SK-N-SH (cell line): ENCODE measurements at regions of chr11 and their contacts with region 1.

Region 1: DNA sequence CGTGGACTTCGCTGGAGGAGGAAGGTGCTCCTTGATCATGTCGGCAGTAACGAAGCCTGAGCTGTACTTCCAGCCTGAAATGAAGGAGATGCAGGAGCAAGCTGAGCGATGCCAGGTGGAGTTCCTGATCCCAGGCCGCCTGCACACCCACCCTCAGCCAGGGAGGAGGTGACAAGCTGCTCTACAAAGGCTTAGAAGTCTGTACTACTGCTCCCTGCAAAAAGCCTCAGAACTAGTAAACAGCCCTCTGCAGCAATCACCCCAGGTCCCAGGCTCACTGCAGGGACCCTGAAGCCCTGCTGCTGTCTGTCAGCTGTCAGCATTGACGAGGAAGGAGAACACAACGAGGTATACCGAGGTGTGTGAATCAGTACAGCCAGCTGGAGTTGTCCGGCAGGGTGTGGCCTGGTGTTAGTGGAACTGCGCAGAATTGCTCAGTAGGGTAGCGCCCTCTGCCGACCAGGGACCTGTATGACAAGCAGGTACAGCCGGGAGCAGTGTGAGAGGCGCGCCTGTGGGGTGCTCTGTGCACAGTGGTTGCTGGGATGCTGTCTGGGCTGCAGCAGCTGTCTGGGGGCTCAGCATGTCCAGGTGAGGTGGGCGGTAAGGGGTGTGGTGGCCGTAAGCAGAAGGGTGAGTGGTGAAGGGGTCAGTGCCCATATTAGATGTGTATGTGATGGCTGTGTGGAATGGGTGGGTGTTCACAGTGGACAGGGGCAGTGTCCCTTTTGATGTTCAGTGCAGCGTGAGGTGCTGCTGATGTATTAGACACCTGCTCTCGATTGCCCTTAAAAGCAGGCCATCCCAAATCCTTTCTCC is 7.6 kb downstream of the CYB5R2 start:
- DNase-seq: peak; percentile 90
- H3K4me3 ChIP-seq: no peak overlapping the region; a peak in 1 of 4 replicates
- H3K27ac ChIP-seq: no peak overlapping the region
- H3K4me1 ChIP-seq: peaks cover 0 to 2% of the 10 kb centered on the region in 2 experiments; a peak in 1 of 4 replicates
- H3K27me3 ChIP-seq: no peaks in the 10 kb centered on the region
- CTCF ChIP-seq: peak; percentile 79
- EP300 ChIP-seq: no peak
- RAD21 ChIP-seq: peak; percentile 93

Region 2: GRCh38 chr11:7098235-7098832 is 567.3 kb before region 1 on chr11:
- CTCF ChIA-PET with region 1: interaction called, 11 read pairs
- POLR2A ChIA-PET with region 1: no interaction called
- DNase-seq: peak; percentile 55
- H3K4me3 ChIP-seq: peak overlapping the region in 1 of 2 experiments; percentile 16; a peak in 1 of 4 replicates
- H3K27ac ChIP-seq: no peak overlapping the region
- H3K4me1 ChIP-seq: no peaks in the 10 kb centered on the region
- H3K27me3 ChIP-seq: no peaks in the 10 kb centered on the region
- CTCF ChIP-seq: peak; percentile 77
- EP300 ChIP-seq: no peak
- RAD21 ChIP-seq: peak; percentile 94

Region 3: DNA sequence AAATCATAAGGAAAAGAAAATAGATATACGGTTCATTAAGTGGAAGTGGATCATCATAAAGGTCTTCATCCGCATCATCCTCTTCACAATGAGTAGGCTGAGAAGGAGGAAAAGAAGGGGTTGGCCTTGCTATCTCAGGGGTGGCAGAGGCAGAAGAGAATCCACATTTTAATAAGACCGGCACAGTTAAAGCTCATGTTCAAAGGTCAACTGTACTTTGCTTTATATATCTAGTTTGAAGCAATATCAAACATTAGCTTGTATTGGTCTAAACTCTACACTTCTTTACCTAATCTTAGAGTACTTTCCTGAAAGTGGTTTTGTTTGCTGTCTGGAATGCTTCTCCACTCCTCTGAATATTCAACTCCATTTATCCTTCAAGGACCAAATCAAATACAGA is 157.6 kb before region 1 on chr11:
- CTCF ChIA-PET with region 1: interaction called, 74 read pairs
- POLR2A ChIA-PET with region 1: no interaction called
- DNase-seq: no peak
- H3K4me3 ChIP-seq: no peak overlapping the region
- H3K27ac ChIP-seq: no peak overlapping the region
- H3K4me1 ChIP-seq: peaks cover 0 to 11% of the 10 kb centered on the region in 2 experiments; a peak in 1 of 4 replicates
- H3K27me3 ChIP-seq: no peaks in the 10 kb centered on the region
- CTCF ChIP-seq: no peak
- EP300 ChIP-seq: no peak
- RAD21 ChIP-seq: no peak

Region 4: DNA sequence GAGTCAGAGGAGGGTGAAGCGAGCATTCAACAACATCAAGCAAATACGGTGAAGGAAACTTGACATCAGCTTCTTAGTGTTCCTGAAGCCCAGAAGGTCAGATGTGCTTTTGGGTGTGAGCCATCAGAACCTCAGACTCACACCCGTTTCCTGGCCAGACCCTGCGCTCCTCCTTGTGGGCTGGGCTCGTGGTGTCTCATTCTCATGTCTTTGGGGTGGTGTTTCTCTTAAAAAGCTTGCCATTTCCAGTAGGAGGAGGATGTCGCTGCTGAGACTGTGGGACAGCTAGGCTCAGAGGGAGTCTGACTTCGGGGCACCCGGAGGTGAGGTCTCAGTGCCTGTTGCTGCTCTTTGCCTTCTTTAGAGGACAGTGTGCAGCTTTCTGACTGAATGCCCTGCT is 127.7 kb before region 1 on chr11:
- CTCF ChIA-PET with region 1: interaction called, 12 read pairs
- POLR2A ChIA-PET with region 1: no interaction called
- DNase-seq: no peak
- H3K4me3 ChIP-seq: no peak overlapping the region
- H3K27ac ChIP-seq: no peak overlapping the region
- H3K4me1 ChIP-seq: peaks cover 0 to 21% of the 10 kb centered on the region in 2 experiments; a peak in 2 of 4 replicates
- H3K27me3 ChIP-seq: no peaks in the 10 kb centered on the region; the same call in 1 of the 2 replicates
- CTCF ChIP-seq: no peak
- EP300 ChIP-seq: no peak
- RAD21 ChIP-seq: no peak

Region 5: DNA sequence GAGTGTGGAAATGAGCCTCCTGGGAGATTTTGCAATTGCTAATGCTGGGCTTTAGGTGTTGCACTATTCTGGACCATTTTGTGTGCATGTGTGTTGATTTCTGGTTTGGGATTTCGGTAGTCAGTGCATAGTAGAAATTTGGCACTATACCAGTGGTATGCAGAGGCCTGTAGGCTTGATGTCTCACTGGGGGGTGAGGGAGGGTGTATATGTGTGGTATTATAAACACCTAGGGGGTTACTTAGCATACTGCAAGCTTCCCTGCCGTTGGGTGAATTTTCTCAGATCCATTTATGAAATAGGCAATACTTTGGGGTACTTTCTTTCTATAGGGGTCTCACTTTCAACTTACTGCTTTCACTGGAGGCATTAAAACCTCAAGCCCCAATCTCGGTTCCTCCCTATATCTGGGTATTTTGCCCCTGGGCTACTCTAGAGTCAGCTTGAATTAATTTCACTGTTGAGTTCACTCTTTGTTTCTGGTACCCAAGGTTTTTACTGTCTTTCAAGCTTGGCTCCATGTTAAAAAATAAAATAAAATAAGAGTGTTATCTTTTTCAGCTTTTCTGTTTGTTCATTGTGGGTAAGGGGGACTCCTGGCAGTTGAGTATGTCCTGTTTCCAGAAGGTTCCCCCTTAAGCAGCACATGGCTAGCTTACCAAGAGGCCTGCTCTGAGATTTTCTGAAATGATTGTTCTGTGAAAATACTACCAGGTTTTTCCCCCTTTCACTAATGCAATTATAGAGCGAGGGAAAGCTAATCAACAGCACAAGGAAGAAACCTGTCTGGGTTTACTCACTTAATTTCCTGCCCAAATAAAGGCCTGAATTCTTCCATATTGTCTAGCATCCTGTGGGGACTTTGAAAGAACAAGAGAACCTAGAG is 106.0 kb before region 1 on chr11:
- CTCF ChIA-PET with region 1: interaction called, 12 read pairs
- POLR2A ChIA-PET with region 1: no interaction called
- DNase-seq: no peak
- H3K4me3 ChIP-seq: no peak overlapping the region
- H3K27ac ChIP-seq: no peak overlapping the region
- H3K4me1 ChIP-seq: peaks cover 0 to 18% of the 10 kb centered on the region in 2 experiments; a peak in 2 of 4 replicates
- H3K27me3 ChIP-seq: no peaks in the 10 kb centered on the region
- CTCF ChIP-seq: no peak
- EP300 ChIP-seq: no peak
- RAD21 ChIP-seq: no peak

Region 6: DNA sequence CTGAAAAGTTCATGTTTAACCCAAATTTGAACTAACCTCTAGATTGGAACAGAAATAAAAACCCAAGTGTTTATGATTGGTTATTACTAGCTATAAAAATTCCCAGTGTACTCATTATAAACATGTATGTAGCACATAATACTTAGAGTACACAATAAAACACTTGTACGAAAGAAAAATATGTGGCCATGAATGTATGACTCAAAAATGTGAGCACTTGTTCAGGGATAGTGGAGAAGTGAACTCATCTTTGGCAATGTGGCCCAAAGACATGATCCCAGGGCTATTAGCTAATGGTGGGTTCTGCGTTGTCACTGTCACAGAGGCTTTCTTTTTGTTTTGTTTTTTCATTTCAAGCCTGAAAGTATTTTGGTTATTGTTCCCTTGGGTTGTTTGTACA is 79.9 kb before region 1 on chr11:
- CTCF ChIA-PET with region 1: interaction called, 12 read pairs
- POLR2A ChIA-PET with region 1: no interaction called
- DNase-seq: no peak
- H3K4me3 ChIP-seq: no peak overlapping the region
- H3K27ac ChIP-seq: no peak overlapping the region
- H3K4me1 ChIP-seq: peaks cover 0 to 2% of the 10 kb centered on the region in 2 experiments; a peak in 1 of 4 replicates
- H3K27me3 ChIP-seq: no peaks in the 10 kb centered on the region
- CTCF ChIP-seq: no peak
- EP300 ChIP-seq: no peak
- RAD21 ChIP-seq: no peak

Region 7: DNA sequence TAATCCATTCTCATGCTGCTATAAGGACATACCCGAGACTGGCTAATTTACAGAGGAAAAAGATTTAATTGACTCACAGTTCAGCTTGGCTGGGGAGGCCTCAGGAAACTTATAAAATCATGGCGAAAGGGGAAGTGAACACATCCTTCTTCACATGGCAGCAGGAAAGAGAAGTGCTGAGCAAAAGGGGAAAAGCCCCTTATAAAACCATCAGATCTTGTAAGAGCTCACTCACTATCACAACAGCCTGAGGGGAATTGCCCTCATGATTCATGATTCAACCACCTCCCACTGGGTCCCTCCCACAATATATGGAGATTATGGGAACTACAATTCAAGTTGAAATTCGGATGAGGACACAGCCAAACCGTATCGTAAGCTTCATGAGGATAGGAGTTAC is 11.4 kb after region 1 on chr11:
- CTCF ChIA-PET with region 1: interaction called, 24 read pairs
- POLR2A ChIA-PET with region 1: no interaction called
- DNase-seq: no peak
- H3K4me3 ChIP-seq: no peak overlapping the region
- H3K27ac ChIP-seq: no peak overlapping the region
- H3K4me1 ChIP-seq: peaks cover 0 to 7% of the 10 kb centered on the region in 2 experiments; a peak in 1 of 4 replicates
- H3K27me3 ChIP-seq: peaks cover 24% of the 10 kb centered on the region; the same call in 1 of the 2 replicates
- CTCF ChIP-seq: no peak
- EP300 ChIP-seq: no peak
- RAD21 ChIP-seq: no peak

Region 8: DNA sequence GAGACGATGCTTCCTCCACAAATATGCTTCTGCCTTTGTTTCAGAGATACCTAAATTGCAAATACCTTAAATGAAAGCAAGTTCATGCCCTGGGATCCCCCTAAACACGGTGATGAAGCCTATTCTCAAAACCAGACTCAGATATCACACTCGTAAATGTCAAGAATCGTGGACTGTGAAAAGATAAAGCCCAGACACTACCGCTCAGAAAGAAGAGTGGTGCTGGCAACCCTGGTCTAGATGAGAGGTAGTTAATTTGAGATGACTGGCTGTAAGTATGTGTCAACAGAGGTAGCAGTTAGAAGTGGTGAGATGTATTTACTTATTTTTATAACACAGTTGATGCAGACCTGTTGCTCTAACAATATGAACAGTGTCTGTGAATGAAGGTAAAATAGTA is 38.1 kb after region 1 on chr11:
- CTCF ChIA-PET with region 1: no interaction called
- POLR2A ChIA-PET with region 1: no interaction called
- DNase-seq: no peak
- H3K4me3 ChIP-seq: no peak overlapping the region
- H3K27ac ChIP-seq: no peak overlapping the region
- H3K4me1 ChIP-seq: no peaks in the 10 kb centered on the region
- H3K27me3 ChIP-seq: peaks cover 5% of the 10 kb centered on the region; the same call in 1 of the 2 replicates
- CTCF ChIP-seq: no peak
- EP300 ChIP-seq: no peak
- RAD21 ChIP-seq: no peak